Activated T-helper 2 cell treated with anti-CD3 and anti-CD28 coated beads, Interferon-gamma antibody, Interleukin-2, Interleukin-4, amounts not matched to agents 10 μg/mL and 5 μg/mL and 100 μg/mL, durations not matched to agents 14 hours and 24 hours and 36 hours (primary cell): ENCODE measurements at regions of chr1 and their contacts with region 1.

Region 1: DNA sequence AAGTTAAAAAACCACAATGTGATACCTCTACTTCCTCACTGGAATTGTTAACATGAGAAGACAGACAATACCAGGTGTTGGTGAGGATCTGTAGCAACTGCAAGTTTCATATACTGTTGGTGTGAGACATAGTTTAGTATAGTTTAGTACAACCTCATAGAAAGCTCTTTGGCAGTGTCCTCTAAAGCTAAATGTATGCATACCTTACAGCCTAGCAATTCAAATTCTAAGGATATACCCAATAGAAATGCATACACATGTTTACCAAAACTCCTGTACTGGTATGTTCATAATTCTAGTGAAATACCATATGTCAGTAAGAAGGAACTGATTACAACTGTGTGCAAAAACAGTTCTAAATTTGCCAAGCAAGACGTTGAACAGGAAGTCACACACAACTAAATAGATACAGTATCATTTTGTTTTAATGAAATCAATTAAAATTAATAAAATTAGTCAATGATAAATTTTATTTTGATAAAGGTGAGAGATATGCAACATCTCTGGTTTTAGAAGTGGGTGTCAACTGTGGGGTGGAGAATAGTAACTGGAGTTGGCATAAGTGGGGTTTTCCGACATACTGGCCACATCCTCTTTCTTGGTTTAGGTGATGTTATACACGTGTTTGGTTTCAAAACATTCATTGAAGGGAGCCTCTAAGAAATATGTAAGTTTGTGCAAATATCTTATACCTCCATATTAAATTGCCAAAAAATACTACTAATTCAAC is 450.7 kb downstream of the PTPRC start:
- DNase-seq: peak; percentile 32
- H3K4me3 Mint-ChIP-seq: no peak overlapping the region
- H3K27ac Mint-ChIP-seq: no peak overlapping the region
- H3K4me1 Mint-ChIP-seq: peaks cover 37% of the 10 kb centered on the region
- H3K27me3 Mint-ChIP-seq: no peaks in the 10 kb centered on the region

Region 2: GRCh38 chr1:198939956-198940355 is 149.6 kb before region 1 on chr1:
- intact Hi-C with region 1: no loop called
- DNase-seq: no peak
- H3K4me3 Mint-ChIP-seq: no peak overlapping the region
- H3K27ac Mint-ChIP-seq: no peak overlapping the region
- H3K4me1 Mint-ChIP-seq: peaks cover 18% of the 10 kb centered on the region
- H3K27me3 Mint-ChIP-seq: no peaks in the 10 kb centered on the region

Region 3: GRCh38 chr1:199029855-199030254 is 59.7 kb before region 1 on chr1:
- intact Hi-C with region 1: loop called (anchors 2 kb)
- DNase-seq: no peak
- H3K4me3 Mint-ChIP-seq: no peak overlapping the region
- H3K27ac Mint-ChIP-seq: peak overlapping the region; percentile 73
- H3K4me1 Mint-ChIP-seq: peaks cover 56% of the 10 kb centered on the region
- H3K27me3 Mint-ChIP-seq: peaks cover 2% of the 10 kb centered on the region

Region 4: GRCh38 chr1:199046618-199047017 is 42.9 kb before region 1 on chr1:
- intact Hi-C with region 1: no loop called
- DNase-seq: no peak
- H3K4me3 Mint-ChIP-seq: no peak overlapping the region
- H3K27ac Mint-ChIP-seq: no peak overlapping the region
- H3K4me1 Mint-ChIP-seq: peaks cover 23% of the 10 kb centered on the region
- H3K27me3 Mint-ChIP-seq: no peaks in the 10 kb centered on the region